Activated CD8-positive, alpha-beta memory T cell treated with anti-CD3 and anti-CD28 coated beads, Interleukin-2, amount 10 ng/mL, durations not matched to agents 7 days and 5 days (primary cell): ENCODE measurements at regions of chr17 and their contacts with region 1.

Region 1: DNA sequence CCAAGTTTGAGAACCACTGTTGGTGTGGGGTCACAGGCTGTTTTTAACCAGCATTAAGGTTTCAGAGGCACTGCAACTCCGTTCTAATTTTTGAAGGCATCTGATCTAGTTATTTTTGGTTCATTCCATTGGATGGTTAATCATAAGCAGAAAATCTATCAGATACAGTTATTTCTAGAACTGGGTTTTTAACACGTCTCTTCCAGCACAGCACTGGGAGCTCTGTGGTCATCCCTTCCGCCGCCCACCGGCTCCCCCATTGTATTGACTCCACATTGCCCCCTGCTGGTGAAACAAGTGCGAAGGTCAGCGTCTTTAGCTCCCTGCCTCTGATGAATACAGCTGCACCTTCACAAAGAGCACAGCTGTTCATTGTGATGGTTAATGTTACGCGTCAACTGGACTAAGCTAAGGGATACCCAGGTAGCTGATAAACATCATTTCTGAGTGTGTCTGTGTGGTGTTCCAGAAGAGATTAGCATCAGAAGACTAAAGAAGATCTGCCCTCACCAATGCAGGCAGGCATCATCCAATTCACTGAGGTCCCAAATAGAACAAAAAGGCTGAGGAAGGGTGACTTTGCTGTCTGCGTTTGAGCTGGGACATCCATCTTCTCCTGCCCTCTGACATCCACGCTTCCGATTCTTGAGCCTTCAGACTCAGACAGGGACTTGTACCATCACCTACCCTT is 8.5 kb downstream of the CCL18 start:
- DNase-seq: peak; percentile 88
- ATAC-seq: peak; percentile 79
- H3K4me3 Mint-ChIP-seq: peak overlapping the region; percentile 3
- H3K27ac Mint-ChIP-seq: peak overlapping the region; percentile 63
- H3K4me1 Mint-ChIP-seq: peaks cover 72% of the 10 kb centered on the region
- H3K27me3 Mint-ChIP-seq: peaks cover 7% of the 10 kb centered on the region

Region 2: GRCh38 chr17:35981908-35982330 is 90.7 kb before region 1 on chr17:
- CTCF ChIA-PET with region 1: interaction called, 103 read pairs
- DNase-seq: no peak
- ATAC-seq: no peak
- H3K4me3 Mint-ChIP-seq: no peak overlapping the region
- H3K27ac Mint-ChIP-seq: no peak overlapping the region
- H3K4me1 Mint-ChIP-seq: peaks cover 11% of the 10 kb centered on the region
- H3K27me3 Mint-ChIP-seq: no peaks in the 10 kb centered on the region

Region 3: DNA sequence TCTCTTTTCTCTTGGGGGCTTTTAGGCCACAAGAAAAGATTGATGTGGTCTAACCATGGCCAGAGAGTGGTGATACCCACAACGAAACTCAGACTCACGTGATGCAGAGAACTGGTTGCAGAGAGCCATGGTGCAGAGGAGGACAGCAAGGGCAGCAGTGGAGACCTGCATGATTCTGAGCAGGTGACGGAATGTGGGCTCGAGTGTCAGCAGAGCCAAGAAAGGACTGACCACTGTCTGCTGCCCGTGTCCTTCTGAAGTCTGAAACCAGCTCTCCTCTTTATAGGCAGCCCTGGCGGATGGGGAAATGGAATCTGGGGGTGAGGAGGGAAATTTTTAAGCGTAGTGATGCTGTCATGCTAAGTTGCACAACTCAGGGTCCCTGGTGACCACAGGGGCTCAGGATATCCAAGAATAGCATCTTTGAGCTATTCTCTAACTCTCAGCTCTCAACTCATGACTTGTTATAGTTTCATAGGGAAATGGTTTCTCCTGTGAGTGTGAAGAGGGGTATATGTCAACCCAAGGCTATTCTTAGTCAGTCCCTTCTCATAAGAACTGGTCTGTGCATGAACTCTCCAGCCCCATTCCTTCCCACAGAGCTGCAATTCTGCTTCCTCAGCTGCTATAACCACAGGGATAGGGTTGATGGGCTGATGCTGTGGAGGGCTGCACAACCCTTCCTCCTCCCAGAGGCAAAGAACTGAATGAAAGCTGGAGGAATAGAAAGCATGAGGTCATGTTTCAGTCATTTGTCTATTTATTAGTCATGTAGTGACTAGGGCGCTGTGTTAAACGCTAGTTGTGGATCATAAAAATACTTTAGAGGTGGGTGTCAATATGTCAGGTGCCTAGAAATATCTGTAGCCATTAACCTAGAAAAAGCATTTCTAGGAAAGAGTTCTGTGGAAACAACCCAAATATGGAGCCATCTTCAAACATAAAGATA is 17.6 kb after region 1 on chr17 and contains the start of gene CCL3:
- CTCF ChIA-PET with region 1: interaction called, 24 read pairs
- DNase-seq: peak; percentile 82
- ATAC-seq: peak; percentile 65
- H3K4me3 Mint-ChIP-seq: peak within 1 kb of the TSS; percentile 74
- H3K27ac Mint-ChIP-seq: peak within 1 kb of the TSS; percentile 87
- H3K4me1 Mint-ChIP-seq: peaks cover 83% of the 10 kb centered on the region
- H3K27me3 Mint-ChIP-seq: peaks cover 5% of the 10 kb centered on the region
- total RNA-seq, gene CCL3: 77.2 to 634 TPM